GM23248 (cell line): ENCODE measurements at regions of chr12 and their contacts with region 1.

Region 1: DNA sequence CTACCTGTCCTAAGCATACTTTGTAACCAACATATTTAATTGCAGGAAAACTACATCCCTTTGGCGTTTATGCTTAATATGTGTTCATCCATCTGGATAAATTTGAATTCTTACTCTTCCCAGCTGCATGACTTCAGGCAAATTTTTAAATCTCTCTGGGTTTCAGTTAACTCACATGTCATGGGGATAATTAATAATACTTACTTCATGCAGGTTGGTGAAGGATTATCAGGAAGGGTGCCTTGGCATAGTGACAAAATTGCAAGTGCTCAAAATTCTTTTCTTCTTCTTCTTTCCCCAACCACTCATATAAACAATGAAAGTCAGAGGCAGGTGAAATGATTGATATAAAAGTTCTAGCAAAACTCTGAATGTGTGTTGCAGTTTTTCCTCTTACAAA is 15.9 kb downstream of the SYT10 start:
- DNase-seq: no peak
- H3K4me3 ChIP-seq: no peak overlapping the region
- H3K27ac ChIP-seq: no peak overlapping the region
- H3K4me1 ChIP-seq: no peaks in the 10 kb centered on the region
- H3K27me3 ChIP-seq: no peaks in the 10 kb centered on the region

Region 2: DNA sequence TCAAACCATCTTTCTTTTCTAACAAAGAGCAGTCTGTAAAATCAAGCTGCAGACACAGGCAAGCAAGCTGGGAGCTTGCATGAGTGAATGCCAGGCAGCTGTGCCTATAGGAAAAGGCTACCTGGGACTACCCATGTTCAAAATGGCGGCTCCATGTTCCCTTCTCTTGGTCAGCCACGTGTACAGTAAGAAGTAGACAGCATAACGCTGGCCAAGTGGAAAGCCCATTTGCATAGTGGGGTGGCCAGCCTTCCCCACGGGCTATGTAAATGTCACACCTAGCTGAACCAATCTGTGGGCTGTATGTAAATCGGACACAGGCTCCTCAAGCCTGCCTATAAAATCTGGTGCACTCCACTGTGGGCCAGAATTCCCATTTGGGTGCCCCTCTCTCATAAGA is 101.2 kb before region 1 on chr12:
- in situ Hi-C with region 1: loop called (anchors 25 kb)
- DNase-seq: no peak
- H3K4me3 ChIP-seq: no peak overlapping the region
- H3K27ac ChIP-seq: no peak overlapping the region
- H3K4me1 ChIP-seq: no peaks in the 10 kb centered on the region
- H3K27me3 ChIP-seq: no peaks in the 10 kb centered on the region

Region 3: GRCh38 chr12:33536431-33536830 is 112.7 kb after region 1 on chr12:
- in situ Hi-C with region 1: no loop called
- DNase-seq: no peak
- H3K4me3 ChIP-seq: no peak overlapping the region
- H3K27ac ChIP-seq: no peak overlapping the region
- H3K4me1 ChIP-seq: no peaks in the 10 kb centered on the region
- H3K27me3 ChIP-seq: no peaks in the 10 kb centered on the region